ENCODE measurements at regions of chr17 and their contacts with region 1.

Region 1: DNA sequence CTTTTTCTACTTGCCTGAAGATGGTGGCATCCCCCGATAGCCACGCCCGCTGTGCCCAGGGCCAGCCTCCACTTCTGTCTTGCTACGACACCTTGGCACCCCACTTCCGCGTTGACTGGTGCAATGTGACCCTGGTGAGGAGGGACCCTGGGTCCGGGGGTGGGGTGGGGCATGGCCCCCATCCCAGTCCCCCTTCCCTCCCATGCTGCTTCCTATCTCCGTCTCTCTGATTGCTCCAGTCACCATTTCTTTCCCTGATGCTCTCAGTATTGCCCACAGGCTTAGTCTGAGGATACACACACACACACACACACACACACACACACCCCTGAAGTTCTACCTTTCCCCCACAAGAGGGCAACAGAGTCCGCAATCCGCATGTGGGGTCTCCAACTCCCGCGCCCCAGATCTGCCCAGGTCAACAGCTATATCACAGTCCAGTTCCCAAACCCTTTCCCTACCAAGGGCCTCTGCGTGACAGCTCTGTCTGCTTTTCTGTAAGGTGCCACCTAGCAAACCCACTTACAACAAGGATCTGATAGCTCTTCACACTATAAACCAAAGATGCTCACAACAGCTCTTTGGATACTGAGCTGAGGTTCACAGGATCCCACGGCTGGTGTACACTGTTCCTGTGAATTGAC is 3.4 kb downstream of the SGCA start:
- DNase-seq: no peak
- H3K4me3 ChIP-seq: no peak overlapping the region
- H3K27me3 ChIP-seq: no peaks in the 10 kb centered on the region
- CTCF ChIP-seq: peak; percentile 93

Region 2: DNA sequence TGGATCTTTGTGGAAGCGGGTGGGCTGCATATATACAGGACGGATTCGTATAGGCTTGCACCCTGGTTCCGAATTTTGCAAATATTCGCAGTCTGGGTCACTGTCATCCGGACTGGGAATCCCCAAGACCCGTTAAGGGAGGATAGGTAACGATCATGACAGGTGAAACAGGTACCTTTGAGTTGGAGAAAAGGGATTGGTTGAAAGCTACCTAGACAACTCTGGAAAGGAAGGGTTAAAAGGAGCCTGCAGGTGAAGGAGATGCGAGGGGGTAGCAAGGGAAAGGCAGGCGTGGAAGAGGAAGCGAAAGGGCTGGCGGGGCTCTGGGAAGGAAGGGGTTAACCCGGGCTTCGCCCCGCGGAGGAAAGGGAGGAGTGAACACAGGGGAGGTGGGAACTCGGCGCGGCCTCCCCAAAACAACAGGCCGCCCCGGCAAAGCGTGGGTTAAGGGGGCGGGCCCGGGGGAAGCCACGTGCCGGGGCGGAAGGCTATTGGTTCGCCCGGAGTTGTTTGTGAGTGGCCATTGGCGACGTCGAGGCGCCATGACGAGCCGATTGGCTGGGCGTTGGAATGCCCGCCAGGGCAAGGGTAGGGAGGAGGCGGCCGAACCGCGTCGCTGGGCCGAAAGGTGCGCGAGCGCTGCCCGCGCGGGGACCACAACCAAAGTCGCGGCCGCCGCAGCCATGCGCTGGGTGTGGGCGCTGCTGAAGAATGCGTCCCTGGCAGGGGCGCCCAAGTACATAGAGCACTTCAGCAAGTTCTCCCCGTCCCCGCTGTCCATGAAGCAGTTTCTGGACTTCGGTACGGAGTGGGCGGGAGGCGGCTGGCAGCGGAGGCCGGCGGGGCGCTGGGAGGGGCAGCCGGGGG is 74.3 kb before region 1 on chr17 and contains the start of gene PDK2:
- CTCF ChIA-PET with region 1: interaction called, 10 read pairs
- POLR2A ChIA-PET with region 1: no interaction called
- DNase-seq: peak; percentile 63
- H3K4me3 ChIP-seq: peak within 1 kb of the TSS; percentile 91
- H3K27me3 ChIP-seq: no peaks in the 10 kb centered on the region
- CTCF ChIP-seq: no peak
- polyA plus RNA-seq, gene PDK2: 79.3 and 155 TPM in 2 replicates

Region 3: DNA sequence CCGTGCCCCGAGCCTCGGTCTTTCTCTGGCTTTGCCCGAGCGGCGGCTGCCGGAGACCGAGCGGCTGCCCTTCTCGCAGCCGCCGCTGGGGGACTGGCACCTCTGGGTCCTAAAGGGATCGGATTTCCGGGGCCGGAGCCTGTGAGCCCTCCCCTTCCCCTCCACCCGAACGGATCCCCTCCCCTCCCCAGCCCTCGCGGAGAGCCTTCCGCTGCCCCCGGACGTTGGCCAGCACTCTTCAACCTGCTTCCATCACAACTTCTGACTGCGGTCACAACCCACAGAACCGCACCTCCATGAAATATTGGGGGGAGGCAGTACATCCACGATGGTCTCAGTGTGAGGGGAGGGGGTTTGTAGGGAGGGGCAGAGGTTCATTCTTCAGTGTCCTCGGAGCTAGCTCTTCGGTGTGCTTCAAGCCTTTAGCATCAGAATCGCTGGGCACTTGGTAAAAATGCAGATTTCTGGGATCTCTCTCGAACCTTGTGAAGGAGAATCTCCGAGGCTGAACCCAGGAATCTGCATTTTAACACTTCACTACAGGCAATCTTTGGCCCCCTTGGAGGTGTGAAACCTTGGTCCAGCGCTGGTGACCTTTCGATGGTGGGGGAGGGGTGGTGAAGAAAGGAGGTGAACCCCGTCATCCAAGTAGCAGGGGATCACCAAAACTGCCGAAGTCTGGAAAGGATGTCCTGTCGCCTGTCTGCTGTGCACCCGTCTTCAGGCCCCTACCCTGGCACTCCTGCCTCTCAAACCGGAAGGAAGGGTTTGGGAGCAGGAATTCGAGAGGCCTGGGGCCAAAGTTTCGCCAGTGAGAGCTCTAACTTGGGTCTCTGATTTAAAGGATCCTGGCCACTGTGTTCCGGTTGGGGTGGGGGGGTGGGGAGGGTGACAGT is 18.0 kb before region 1 on chr17:
- CTCF ChIA-PET with region 1: interaction called, 16 read pairs
- POLR2A ChIA-PET with region 1: no interaction called
- DNase-seq: no peak
- H3K4me3 ChIP-seq: peak overlapping the region; percentile 67
- H3K27me3 ChIP-seq: no peaks in the 10 kb centered on the region
- CTCF ChIP-seq: peak; percentile 75

Region 4: GRCh38 chr17:50200457-50201275 is 31.4 kb after region 1 on chr17:
- CTCF ChIA-PET with region 1: interaction called, 7 read pairs
- POLR2A ChIA-PET with region 1: interaction called, 13 read pairs
- DNase-seq: no peak
- H3K4me3 ChIP-seq: peak overlapping the region; percentile 97
- H3K27me3 ChIP-seq: no peaks in the 10 kb centered on the region
- CTCF ChIP-seq: peak; percentile 90

Region 5: GRCh38 chr17:50279181-50279526 is 109.9 kb after region 1 on chr17:
- CTCF ChIA-PET with region 1: interaction called, 146 read pairs
- POLR2A ChIA-PET with region 1: no interaction called
- DNase-seq: no peak
- H3K4me3 ChIP-seq: no peak overlapping the region
- H3K27me3 ChIP-seq: no peaks in the 10 kb centered on the region
- CTCF ChIP-seq: no peak

Region 6: DNA sequence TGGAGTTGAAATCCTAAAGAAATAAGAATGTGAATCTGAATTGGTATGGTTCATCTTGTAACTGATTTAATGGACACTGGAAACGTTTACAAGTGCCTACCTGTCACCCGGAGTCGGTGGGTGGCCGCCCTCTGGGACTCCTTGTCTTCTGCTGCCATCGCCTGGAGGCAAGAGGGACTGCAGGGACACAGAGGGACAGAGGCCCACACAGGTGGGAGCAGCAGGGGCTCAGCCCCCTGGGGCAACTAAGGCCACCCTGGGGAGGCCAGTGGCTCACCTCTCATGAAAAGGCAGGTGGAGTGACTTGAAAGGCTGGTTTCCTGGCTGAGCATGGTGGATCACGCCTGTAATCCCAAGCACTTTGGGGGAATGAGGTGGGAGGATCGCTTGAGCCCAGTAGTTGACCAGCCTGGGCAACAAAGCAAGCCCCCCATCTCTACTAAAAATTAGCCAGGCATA is 128.2 kb after region 1 on chr17:
- CTCF ChIA-PET with region 1: interaction called, 229 read pairs
- POLR2A ChIA-PET with region 1: interaction called, 4 read pairs
- DNase-seq: no peak
- H3K4me3 ChIP-seq: no peak overlapping the region
- H3K27me3 ChIP-seq: peaks cover 1% of the 10 kb centered on the region; the same call in 1 of the 2 replicates
- CTCF ChIP-seq: peak; percentile 97

Region 7: DNA sequence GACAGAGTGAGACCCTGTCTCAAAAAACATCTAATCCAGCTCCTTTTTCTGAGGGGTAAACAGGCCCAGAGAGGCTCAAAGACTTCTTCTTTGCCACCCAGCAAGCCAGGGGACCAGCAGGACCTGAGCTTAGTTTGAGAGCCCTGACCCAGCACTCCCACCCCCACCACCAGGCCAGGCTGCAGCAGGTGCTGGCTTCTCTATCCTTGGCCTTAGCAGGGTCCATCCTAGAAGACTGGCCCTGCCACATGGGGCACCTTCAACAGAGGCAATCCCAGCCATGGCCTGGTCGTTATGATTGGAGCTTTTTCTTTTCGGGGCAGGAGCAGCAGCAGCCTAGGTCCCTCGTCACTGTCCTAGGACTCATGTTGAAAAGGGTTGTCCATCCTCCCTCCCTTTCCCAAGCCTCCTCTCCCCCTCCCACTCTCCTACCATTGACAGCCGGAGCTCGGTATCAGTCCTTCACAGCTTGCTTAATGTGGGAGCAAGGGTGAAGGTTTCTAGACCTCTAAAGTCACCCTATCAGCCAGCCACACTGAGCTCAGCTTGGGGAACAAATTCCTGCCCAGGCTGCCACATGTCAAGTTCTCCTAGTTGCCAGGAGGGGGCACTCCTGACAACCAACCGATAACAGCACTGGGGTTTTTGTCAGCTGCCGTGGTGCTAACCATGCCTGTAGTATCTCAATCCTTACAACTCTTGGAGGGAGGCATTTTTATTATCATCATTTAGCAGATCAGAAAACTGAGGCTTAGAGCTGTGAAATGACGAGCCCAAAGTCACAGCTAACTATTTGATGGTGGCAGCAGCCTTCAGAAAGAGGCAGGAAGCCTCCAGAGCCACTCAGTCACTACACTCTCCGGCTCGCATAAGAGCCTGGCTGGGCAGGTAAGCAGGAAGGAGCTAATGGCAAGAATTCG is 192.6 kb after region 1 on chr17:
- CTCF ChIA-PET with region 1: interaction called, 10 read pairs
- POLR2A ChIA-PET with region 1: no interaction called
- DNase-seq: no peak
- H3K4me3 ChIP-seq: no peak overlapping the region
- H3K27me3 ChIP-seq: no peaks in the 10 kb centered on the region
- CTCF ChIP-seq: peak; percentile 85